CD8-positive, alpha-beta T cell (primary cell): ENCODE measurements at regions of chr20 and their contacts with region 1.

Region 1: GRCh38 chr20:3786665-3787323 is at the start of gene CENPB:
- DNase-seq: peak; percentile 83 to 95 (median 90)
- ATAC-seq: peak; percentile 87
- H3K4me3 ChIP-seq: peak within 1 kb of the TSS; percentile 46 to 55
- H3K4me3 Mint-ChIP-seq: peak within 1 kb of the TSS; percentile 84
- H3K27ac ChIP-seq: peak within 1 kb of the TSS; percentile 37 to 75
- H3K27ac Mint-ChIP-seq: peak within 1 kb of the TSS; percentile 91
- H3K4me1 ChIP-seq: peaks cover 24% of the 10 kb centered on the region
- H3K4me1 Mint-ChIP-seq: peaks cover 30% of the 10 kb centered on the region
- H3K27me3 ChIP-seq: no peaks in the 10 kb centered on the region
- H3K27me3 Mint-ChIP-seq: no peaks in the 10 kb centered on the region
- CTCF ChIP-seq: peak; percentile 86
- total RNA-seq, gene CENPB: 23.2 to 24.1 TPM

Region 2: DNA sequence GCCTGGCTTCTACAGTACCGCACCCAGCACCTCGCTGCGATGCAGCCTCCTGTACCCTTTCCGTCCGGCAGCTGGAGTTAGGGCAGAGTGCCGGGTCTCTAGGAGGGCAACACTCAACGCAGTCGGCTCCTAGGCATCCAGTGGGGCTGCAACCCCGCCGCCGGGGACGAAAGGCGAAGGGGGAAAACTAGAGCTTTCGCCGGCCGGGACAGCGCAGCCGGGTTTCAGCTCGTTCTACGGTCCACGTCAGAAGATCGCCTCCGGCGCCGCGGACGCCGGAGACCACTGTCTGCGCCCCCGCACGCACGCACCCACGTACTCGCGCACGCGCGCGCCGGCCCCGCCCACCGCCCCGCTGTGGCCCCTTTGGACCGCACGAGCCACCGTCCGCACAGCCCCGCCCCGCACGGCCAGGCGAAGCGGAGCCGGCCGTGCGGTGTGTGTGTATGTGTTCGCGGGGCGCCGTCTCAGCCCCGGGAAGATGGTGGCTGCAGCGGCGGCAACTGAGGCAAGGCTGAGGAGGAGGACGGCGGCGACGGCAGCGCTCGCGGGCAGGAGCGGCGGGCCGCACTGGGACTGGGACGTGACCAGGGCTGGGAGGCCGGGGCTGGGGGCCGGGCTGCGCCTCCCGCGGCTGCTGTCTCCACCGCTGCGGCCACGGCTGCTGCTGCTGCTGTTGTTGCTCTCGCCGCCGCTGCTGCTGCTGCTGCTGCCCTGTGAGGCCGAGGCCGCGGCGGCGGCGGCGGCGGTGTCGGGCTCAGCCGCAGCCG is 316.0 kb before region 1 on chr20 and contains the start of gene ATRN:
- CTCF ChIA-PET with region 1: no interaction called
- POLR2A ChIA-PET with region 1: no interaction called
- intact Hi-C with region 1: loop called in 1 of 2 experiments (anchors 5 kb)
- DNase-seq: peak; percentile 70 to 94 (median 89)
- ATAC-seq: peak; percentile 92
- H3K4me3 ChIP-seq: peak within 1 kb of the TSS; percentile 68 to 86
- H3K4me3 Mint-ChIP-seq: peak within 1 kb of the TSS; percentile 92
- H3K27ac ChIP-seq: peak within 1 kb of the TSS; percentile 47 to 72
- H3K27ac Mint-ChIP-seq: peak within 1 kb of the TSS; percentile 83
- H3K4me1 ChIP-seq: peaks cover 33% of the 10 kb centered on the region
- H3K4me1 Mint-ChIP-seq: peaks cover 35% of the 10 kb centered on the region
- H3K27me3 ChIP-seq: no peaks in the 10 kb centered on the region
- H3K27me3 Mint-ChIP-seq: no peaks in the 10 kb centered on the region
- CTCF ChIP-seq: no peak
- total RNA-seq, gene ATRN: 8.4 to 8.7 TPM

Region 3: GRCh38 chr20:3753098-3753980 is 33.5 kb before region 1 on chr20:
- CTCF ChIA-PET with region 1: interaction called, 3 read pairs
- POLR2A ChIA-PET with region 1: no interaction called
- intact Hi-C with region 1: loop called in 1 of 2 experiments (anchors 1 kb)
- DNase-seq: peak; percentile 37 to 82 (median 67)
- ATAC-seq: peak; percentile 87
- H3K4me3 ChIP-seq: no peak overlapping the region
- H3K4me3 Mint-ChIP-seq: no peak overlapping the region
- H3K27ac ChIP-seq: no peak overlapping the region
- H3K27ac Mint-ChIP-seq: no peak overlapping the region
- H3K4me1 ChIP-seq: no peaks in the 10 kb centered on the region
- H3K4me1 Mint-ChIP-seq: peaks cover 4% of the 10 kb centered on the region
- H3K27me3 ChIP-seq: no peaks in the 10 kb centered on the region
- H3K27me3 Mint-ChIP-seq: no peaks in the 10 kb centered on the region
- CTCF ChIP-seq: peak; percentile 57

Region 4: GRCh38 chr20:3811467-3812258 is 24.9 kb after region 1 on chr20:
- CTCF ChIA-PET with region 1: interaction called, 195 read pairs
- POLR2A ChIA-PET with region 1: interaction called, 14 read pairs
- intact Hi-C with region 1: no loop called
- DNase-seq: peak; percentile 79 to 98 (median 95)
- ATAC-seq: peak; percentile 90
- H3K4me3 ChIP-seq: peak overlapping the region; percentile 49 to 72
- H3K4me3 Mint-ChIP-seq: peak overlapping the region; percentile 85
- H3K27ac ChIP-seq: peak overlapping the region; percentile 79 to 90
- H3K27ac Mint-ChIP-seq: peak overlapping the region; percentile 99
- H3K4me1 ChIP-seq: peaks cover 85% of the 10 kb centered on the region
- H3K4me1 Mint-ChIP-seq: peaks cover 73% of the 10 kb centered on the region
- H3K27me3 ChIP-seq: no peaks in the 10 kb centered on the region
- H3K27me3 Mint-ChIP-seq: no peaks in the 10 kb centered on the region
- CTCF ChIP-seq: no peak

Region 5: DNA sequence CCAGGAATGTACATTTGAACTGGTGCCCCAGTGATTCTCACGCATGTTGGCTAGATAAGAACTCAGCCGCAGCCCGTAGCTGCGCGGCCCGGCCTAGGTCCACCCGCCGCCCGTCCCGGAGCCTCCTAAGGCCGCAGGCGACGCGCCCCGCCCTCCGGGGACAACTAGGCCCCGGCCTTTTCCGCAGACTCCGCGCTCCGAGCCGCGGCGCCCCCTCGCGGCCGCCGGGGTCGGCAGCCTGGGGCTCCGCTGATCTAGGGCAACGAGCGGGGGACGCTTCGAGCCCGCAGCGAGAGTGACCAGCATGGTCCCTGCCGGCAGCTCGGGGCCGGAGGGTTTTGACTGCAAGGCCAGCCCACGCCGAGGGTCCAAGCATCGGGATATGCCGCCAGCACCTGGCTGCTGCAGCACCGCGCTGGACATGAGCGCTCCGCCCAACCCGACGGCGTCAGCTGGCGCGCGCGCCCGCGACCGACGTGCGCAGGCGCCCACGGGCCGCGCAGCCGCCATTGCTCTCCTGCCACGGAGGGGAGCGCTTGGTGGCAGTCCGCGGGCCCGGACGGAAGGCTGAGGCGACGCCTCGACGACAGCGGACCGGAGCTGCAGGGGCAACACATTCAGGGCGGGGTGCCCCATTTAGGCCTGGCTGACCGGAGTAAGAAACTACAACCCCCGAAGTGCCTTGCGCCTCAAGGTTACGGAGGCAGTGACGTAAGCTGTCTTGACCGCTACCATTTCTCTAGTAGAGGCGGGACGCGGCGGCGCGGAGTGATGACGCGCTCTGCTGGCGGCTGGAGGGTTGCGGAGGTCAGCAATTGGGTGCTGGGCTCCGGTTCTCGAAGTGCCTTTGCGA is 33.5 kb after region 1 on chr20 and contains the start of gene AP5S1:
- CTCF ChIA-PET with region 1: interaction called, 195 read pairs
- POLR2A ChIA-PET with region 1: interaction called, 49 read pairs
- intact Hi-C with region 1: loop called (anchors 1 kb)
- DNase-seq: peak; percentile 81 to 96 (median 89)
- ATAC-seq: peak; percentile 85
- H3K4me3 ChIP-seq: peak within 1 kb of the TSS; percentile 60 to 64
- H3K4me3 Mint-ChIP-seq: peak within 1 kb of the TSS; percentile 92
- H3K27ac ChIP-seq: peak within 1 kb of the TSS; percentile 92 to 97
- H3K27ac Mint-ChIP-seq: peak within 1 kb of the TSS; percentile 98
- H3K4me1 ChIP-seq: peaks cover 51% of the 10 kb centered on the region
- H3K4me1 Mint-ChIP-seq: peaks cover 51% of the 10 kb centered on the region
- H3K27me3 ChIP-seq: no peaks in the 10 kb centered on the region
- H3K27me3 Mint-ChIP-seq: no peaks in the 10 kb centered on the region
- CTCF ChIP-seq: peak; percentile 94
- total RNA-seq, gene AP5S1: 5.2 to 6.3 TPM

Region 6: GRCh38 chr20:3846740-3847428 is 60.1 kb after region 1 on chr20 and contains the start of gene MAVS:
- CTCF ChIA-PET with region 1: interaction called, 66 read pairs
- POLR2A ChIA-PET with region 1: interaction called, 3 read pairs
- intact Hi-C with region 1: loop called (anchors 1 to 2 kb)
- DNase-seq: peak; percentile 67 to 92 (median 85)
- ATAC-seq: peak; percentile 97
- H3K4me3 ChIP-seq: peak within 1 kb of the TSS; percentile 76 to 87
- H3K4me3 Mint-ChIP-seq: peak within 1 kb of the TSS; percentile 87
- H3K27ac ChIP-seq: peak within 1 kb of the TSS; percentile 60 to 79
- H3K27ac Mint-ChIP-seq: peak within 1 kb of the TSS; percentile 82
- H3K4me1 ChIP-seq: peaks cover 10% of the 10 kb centered on the region
- H3K4me1 Mint-ChIP-seq: peaks cover 33% of the 10 kb centered on the region
- H3K27me3 ChIP-seq: no peaks in the 10 kb centered on the region
- H3K27me3 Mint-ChIP-seq: no peaks in the 10 kb centered on the region
- CTCF ChIP-seq: no peak
- total RNA-seq, gene MAVS: 10.0 to 10.5 TPM